ENCODE measurements at regions of chr10 and their contacts with region 1.

Region 1: DNA sequence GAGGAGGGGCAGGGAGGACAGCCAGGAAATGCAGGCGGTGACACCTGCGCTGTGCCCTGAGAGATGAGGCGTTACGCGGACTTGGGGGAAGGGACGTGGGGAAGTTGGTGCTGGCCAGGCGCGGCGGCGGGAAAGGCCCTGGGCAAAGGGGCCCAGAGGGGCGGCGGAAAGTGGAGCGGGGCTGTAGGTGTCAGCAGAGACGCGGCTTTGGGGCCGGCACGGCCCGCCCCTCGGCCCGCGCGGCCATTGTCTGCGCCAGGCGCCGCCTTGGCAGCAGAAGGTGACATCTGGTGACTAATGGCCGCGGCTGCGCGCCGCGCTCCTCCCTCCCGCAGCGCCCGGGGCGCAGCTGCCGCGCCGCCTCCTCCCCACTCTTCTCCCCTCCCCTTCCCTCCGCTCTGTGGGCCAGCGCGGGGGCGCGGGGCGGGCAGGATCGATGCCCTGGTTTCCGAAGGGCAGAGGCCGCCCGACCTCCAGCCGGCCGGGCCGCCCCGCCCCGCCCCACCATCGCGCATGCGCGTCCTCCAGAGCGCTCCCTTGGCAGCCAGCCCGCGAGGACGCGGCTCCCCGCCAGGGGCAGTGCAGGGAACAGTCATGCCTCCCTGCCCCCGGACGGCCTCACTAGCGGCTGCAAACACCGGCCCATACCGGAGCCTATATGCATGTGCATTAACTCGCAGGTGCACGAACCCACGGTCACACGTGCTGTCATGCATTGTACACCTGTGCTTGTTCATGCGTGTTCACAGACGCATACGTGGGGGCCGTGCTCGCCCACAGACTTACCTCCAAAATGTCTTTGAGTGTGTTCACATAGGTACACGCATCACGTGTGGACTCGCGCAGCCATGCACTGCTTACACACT is 269.6 kb downstream of the RPS24 start:
- DNase-seq: peak; percentile 79 to 90
- ATAC-seq: peak; percentile 83 to 87
- H3K4me3 ChIP-seq: peak overlapping the region; percentile 53 to 73 (median 62)
- H3K27ac ChIP-seq: peak overlapping the region; percentile 87 to 94 (median 90)
- H3K4me1 ChIP-seq: peaks cover 13 to 20% of the 10 kb centered on the region in 2 donors
- H3K27me3 ChIP-seq: no peaks in the 10 kb centered on the region
- CTCF ChIP-seq: peak; percentile 65 to 82 (median 77)
- POLR2A ChIP-seq: peak; percentile 63 to 81

Region 2: DNA sequence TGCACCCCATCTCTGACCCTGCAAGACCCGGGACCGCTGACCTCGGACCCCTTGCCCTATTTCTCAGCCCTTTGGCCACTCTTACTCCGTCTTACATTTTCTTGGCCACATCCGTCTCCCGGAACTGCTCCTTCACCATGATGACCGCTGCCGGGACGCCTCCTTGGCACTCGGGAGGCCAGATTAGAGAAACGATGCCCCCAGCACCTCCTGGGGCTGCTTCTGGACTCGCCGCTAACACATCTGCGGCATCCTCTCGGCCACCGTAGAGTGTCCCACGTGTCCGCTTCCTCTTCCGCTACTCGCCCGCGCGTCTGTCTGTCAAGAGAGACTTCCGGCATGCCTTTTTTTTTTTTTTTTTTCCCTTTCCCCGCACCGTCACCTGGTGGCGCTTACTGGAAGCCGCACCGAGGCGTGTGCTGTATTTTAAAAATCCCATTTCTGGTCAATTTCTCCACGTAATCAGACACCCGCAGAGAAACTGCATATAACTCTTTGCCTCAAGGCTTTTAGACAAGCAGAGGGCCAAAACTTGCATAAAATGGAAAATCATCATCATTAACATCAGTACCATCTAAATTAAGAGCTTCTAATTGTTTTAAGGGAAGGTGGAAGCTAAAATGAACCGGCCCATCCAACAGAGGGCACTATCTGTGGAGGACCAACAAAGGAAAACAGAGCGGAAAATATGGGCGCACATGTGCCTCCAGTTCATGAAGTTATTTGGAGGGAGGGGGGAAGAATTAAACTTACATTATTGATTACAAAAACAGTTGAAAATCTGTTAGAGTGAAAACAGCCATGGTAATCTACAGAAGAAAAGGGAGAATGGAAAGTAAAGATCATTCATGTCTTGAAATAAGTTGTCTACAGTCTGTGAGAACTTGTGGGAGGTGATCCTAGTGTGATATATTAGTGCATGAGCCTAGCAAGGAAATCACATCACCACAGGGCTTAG is 273.7 kb before region 1 on chr10 and contains the start of gene POLR3A:
- in situ Hi-C with region 1: loop called in 2 of 4 experiments (anchors 25 kb)
- intact Hi-C with region 1: loop called (anchors 5 kb)
- DNase-seq: peak; percentile 94 to 97
- ATAC-seq: peak; percentile 73 to 75
- H3K4me3 ChIP-seq: peak within 1 kb of the TSS; percentile 95 to 99 (median 97)
- H3K27ac ChIP-seq: peak within 1 kb of the TSS; percentile 79 to 87 (median 84)
- H3K4me1 ChIP-seq: peaks cover 23 to 28% of the 10 kb centered on the region in 2 donors
- H3K27me3 ChIP-seq: no peaks in the 10 kb centered on the region
- CTCF ChIP-seq: peak; percentile 69 to 86 (median 73)
- POLR2A ChIP-seq: peak; percentile 46 to 62
- total RNA-seq, gene POLR3A: 11.0 to 17.4 (median 15.5) TPM

Region 3: DNA sequence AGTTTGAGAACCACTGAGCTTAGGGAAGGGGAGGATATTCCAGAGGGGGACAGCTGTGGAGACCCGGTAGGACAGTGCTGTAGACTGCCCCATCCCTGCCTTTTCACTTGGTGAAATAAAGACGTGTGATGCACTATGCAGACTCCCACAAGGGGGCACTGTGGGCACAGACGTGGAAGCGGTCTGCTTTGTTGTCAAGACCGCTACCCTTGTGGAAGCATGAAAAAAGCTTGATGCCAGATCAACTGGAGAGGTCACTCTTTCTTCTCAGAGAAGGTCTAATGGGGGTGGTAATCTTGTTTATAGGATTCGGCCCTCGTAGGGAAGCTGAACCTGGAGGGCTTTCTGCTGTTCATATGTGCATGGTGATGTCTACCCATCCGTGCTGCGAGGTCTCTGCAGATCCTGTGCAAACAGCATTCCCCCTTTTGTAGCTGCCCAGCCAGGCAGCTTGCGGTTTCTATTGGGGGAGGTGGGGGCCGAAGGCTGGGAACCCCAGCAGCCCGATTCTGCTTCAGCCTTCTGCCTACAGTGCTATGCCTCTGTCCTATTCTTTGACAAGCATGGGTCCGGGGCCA is 255.8 kb before region 1 on chr10:
- in situ Hi-C with region 1: loop called in 3 of 4 experiments (anchors 25 kb)
- intact Hi-C with region 1: loop called (anchors 5 kb)
- DNase-seq: peak; percentile 57 to 72
- ATAC-seq: peak; percentile 87 to 91
- H3K4me3 ChIP-seq: no peak overlapping the region
- H3K27ac ChIP-seq: no peak overlapping the region
- H3K4me1 ChIP-seq: peaks cover 6 to 10% of the 10 kb centered on the region in 2 donors
- H3K27me3 ChIP-seq: no peaks in the 10 kb centered on the region
- CTCF ChIP-seq: peak; percentile 78 to 89 (median 82)
- POLR2A ChIP-seq: no peak

Region 4: DNA sequence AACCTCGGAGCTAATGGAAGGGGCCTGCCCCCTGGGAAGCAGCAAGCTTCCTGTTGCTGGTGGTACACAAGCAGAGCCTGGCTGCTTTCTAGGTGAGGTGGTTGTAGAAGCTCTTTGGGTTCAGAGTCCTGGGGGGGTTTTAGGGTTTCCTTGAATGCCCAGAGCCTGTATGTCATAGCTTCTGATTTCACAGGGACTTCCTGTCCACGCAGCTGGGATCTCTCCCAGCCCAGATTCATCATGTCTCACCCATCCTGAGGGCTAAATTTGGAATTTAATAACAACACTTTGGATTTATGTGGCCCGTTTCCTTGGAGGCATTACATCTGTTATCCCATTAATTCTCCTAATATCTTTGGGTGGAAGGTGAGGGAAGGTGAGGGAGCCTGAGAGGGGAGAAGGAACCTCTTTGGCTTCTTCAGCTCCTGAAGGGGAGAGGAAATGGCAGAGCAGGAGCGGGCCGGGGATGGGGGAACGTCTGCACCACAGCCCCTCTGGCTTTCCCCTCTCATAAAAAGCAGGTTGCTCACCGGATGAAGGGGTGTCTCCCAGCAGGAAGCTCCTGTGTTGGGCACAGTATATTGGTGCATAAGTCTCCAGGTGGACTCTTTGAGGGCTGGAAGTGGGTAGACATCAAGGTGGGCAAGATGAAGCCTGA is 249.9 kb before region 1 on chr10:
- in situ Hi-C with region 1: loop called in 3 of 4 experiments (anchors 25 kb)
- intact Hi-C with region 1: loop called (anchors 5 kb)
- DNase-seq: no peak
- ATAC-seq: no peak
- H3K4me3 ChIP-seq: no peak overlapping the region
- H3K27ac ChIP-seq: no peak overlapping the region
- H3K4me1 ChIP-seq: no peaks in the 10 kb centered on the region
- H3K27me3 ChIP-seq: no peaks in the 10 kb centered on the region
- CTCF ChIP-seq: no peak
- POLR2A ChIP-seq: no peak

Region 5: GRCh38 chr10:78211561-78212051 is 91.6 kb before region 1 on chr10:
- in situ Hi-C with region 1: no loop called
- intact Hi-C with region 1: loop called (anchors 1 kb)
- DNase-seq: no peak
- ATAC-seq: no peak
- H3K4me3 ChIP-seq: no peak overlapping the region
- H3K27ac ChIP-seq: no peak overlapping the region
- H3K4me1 ChIP-seq: peaks cover 13 to 20% of the 10 kb centered on the region in 2 donors
- H3K27me3 ChIP-seq: no peaks in the 10 kb centered on the region
- CTCF ChIP-seq: peak in 3 of 5 experiments; percentile 22 to 30 (median 28)
- POLR2A ChIP-seq: no peak

Region 6: GRCh38 chr10:78231939-78232338 is 71.3 kb before region 1 on chr10:
- in situ Hi-C with region 1: no loop called
- intact Hi-C with region 1: loop called (anchors 5 kb)
- DNase-seq: peak; percentile 22 to 58
- ATAC-seq: peak; percentile 85 to 94
- H3K4me3 ChIP-seq: no peak overlapping the region
- H3K27ac ChIP-seq: no peak overlapping the region
- H3K4me1 ChIP-seq: peaks cover 0 to 10% of the 10 kb centered on the region in 2 donors
- H3K27me3 ChIP-seq: no peaks in the 10 kb centered on the region
- CTCF ChIP-seq: peak; percentile 41 to 60 (median 48)
- POLR2A ChIP-seq: no peak

Region 7: DNA sequence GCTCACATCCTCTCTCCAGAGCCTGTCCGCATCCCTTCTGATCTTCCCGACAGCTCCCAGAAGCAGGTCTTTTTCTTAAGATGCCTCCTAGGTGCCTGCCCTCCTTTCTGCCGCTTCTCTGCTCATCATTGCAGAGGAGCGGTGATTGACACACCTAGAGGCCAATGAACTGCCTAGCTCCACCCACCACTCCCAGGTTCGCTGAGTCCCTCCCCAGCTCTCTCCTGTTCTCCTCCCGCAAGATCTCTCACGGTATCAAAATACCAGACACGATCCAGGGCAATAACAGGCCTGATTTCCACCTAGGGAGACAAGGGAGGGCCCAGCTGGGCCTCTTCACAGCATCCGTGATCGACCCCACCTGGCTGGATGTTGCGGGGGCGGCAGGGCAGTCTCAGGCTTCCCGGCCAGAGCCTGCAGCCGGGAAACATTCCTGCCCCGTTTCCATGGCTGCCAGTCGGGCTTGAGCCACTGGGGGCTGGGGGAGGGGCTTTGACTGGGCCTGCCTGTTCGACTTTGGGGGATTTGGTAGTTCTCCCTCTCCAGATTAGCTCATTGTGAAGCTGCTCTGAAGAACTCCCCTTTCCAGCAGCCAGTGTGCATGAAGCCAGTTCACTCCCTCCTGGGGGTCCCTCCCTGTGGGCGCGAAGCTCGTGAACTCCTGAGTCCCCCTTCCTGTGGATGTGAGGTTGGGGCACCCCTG is 103.9 kb after region 1 on chr10:
- in situ Hi-C with region 1: no loop called
- intact Hi-C with region 1: no loop called
- DNase-seq: peak in 1 of 2 donors; percentile 41
- ATAC-seq: peak in 1 of 2 donors; percentile 34
- H3K4me3 ChIP-seq: no peak overlapping the region
- H3K27ac ChIP-seq: no peak overlapping the region
- H3K4me1 ChIP-seq: peaks cover 3 to 11% of the 10 kb centered on the region in 2 donors
- H3K27me3 ChIP-seq: peaks cover 0 to 3% (median 0%) of the 10 kb centered on the region in 3 donors
- CTCF ChIP-seq: no peak
- POLR2A ChIP-seq: no peak

Region 8: GRCh38 chr10:78657163-78657861 is 354.1 kb after region 1 on chr10:
- in situ Hi-C with region 1: no loop called
- intact Hi-C with region 1: loop called (anchors 1 kb)
- DNase-seq: peak; percentile 60 to 74
- ATAC-seq: peak; percentile 94 to 96
- H3K4me3 ChIP-seq: no peak overlapping the region
- H3K27ac ChIP-seq: no peak overlapping the region
- H3K4me1 ChIP-seq: no peaks in the 10 kb centered on the region
- H3K27me3 ChIP-seq: no peaks in the 10 kb centered on the region
- CTCF ChIP-seq: peak; percentile 32 to 79 (median 57)
- POLR2A ChIP-seq: no peak

Measured in gastrocnemius medialis (tissue), 4 donors.